HepG2 (cell line): ENCODE measurements at regions of chrX and their contacts with region 1.

Region 1: DNA sequence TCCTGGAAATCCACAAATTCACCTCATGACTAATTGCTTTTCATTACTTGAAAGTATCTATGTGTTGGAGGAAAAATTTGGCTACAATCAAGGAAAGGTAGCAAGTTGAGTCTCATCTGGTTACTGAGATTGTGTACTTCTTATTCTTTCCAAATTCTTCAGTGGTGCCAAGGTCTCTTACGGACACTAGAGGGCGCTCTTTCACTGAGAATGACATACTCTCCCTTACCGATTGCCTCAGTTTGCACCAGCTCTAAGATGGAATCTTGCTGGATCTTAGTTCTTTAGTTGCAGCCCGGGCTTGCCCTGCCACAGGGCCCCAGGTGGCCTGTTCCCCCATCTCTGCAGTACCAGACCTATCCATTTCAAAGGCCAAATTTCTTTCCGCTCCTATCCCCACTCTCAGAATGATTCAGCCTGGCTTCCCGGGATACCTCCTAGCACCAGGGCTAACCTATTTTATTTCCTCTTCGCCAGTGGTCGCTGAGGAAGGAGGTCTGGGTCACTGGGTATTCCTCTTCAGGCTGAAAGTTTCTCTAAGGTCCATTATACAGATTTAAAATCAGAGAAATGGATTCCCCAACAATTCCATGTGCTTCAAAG is 24.6 kb upstream of the GPR50 start:
- DNase-seq: peak; percentile 14
- ATAC-seq: peak; percentile 69
- H3K4me3 ChIP-seq: no peak overlapping the region
- H3K27ac ChIP-seq: no peak overlapping the region
- H3K4me1 ChIP-seq: no peaks in the 10 kb centered on the region
- H3K27me3 ChIP-seq: no peaks in the 10 kb centered on the region
- CTCF ChIP-seq: peak; percentile 75
- EP300 ChIP-seq: no peak
- POLR2A ChIP-seq: no peak
- RAD21 ChIP-seq: peak; percentile 57

Region 2: GRCh38 chrX:151177141-151178027 is 25.6 kb after region 1 on chrX:
- CTCF ChIA-PET with region 1: no interaction called
- POLR2A ChIA-PET with region 1: no interaction called
- in situ Hi-C with region 1: no loop called
- intact Hi-C with region 1: no loop called
- DNase-seq: no peak
- ATAC-seq: peak; percentile 93
- H3K4me3 ChIP-seq: peak overlapping the region in 2 of 3 experiments; percentile 4 to 33; a peak in 1 of 6 replicates
- H3K27ac ChIP-seq: no peak overlapping the region
- H3K4me1 ChIP-seq: no peaks in the 10 kb centered on the region
- H3K27me3 ChIP-seq: peaks cover 0 to 13% of the 10 kb centered on the region in 2 experiments; a peak in 3 of 5 replicates
- CTCF ChIP-seq: no peak
- EP300 ChIP-seq: no peak
- POLR2A ChIP-seq: no peak
- RAD21 ChIP-seq: no peak

Region 3: DNA sequence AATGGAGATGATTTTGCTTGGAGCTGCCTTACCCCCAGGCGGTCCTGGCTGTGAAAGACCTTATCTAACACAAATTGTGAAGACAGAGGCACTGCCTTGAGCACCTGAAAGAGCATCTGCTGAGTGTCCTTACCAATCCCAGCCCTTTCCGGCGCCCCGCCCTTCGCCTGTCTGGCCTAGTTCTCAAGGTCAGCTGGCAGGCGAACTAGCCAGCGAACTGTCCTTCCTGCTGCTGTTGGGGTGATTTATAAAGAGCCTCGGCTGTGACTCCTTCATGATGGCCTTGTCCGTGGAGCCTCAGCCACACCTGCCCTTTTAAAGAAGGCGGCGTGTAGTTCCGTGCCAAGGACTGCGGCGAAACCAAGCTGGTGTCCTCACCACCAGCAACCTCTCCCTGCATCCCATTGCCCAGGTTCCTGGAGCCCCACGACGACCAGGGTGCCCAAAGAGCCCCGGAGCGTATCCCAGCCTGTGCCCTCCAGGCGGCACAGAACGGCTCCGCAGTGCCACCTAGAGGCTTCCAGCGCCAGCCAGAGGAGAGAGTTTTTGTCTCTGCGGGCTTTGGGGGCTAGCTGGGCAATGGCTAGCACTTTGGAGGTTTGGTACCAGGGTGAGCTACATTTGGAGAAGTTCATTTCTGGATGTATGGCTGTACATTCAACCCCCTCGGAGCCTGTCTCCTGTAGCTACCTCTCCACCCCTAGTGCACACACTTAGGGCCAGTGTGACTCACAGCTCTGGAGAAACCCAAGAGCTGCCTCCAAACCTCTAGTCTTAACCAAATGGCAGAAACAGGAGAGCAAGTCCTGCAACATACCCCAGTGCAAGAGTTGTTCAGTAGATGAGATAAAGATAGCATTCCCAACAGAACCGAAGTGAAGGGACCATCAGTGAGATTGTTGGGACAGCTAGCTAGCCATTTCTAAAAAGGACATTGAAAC is 208.4 kb after region 1 on chrX:
- CTCF ChIA-PET with region 1: interaction called, 3 read pairs
- POLR2A ChIA-PET with region 1: no interaction called
- in situ Hi-C with region 1: loop called (anchors 25 kb)
- intact Hi-C with region 1: no loop called
- DNase-seq: peak; percentile 0
- ATAC-seq: peak; percentile 94
- H3K4me3 ChIP-seq: 0 out of 6 replicates have a peak overlapping the region, but pooled peaks of 1 of the 3 experiments have one; percentile 23
- H3K27ac ChIP-seq: no peak overlapping the region
- H3K4me1 ChIP-seq: no peaks in the 10 kb centered on the region
- H3K27me3 ChIP-seq: no peaks in the 10 kb centered on the region; a peak in 1 of 5 replicates
- CTCF ChIP-seq: peak; percentile 69
- EP300 ChIP-seq: no peak
- POLR2A ChIP-seq: no peak
- RAD21 ChIP-seq: 0 out of 2 replicates have a peak, but pooled peaks have one; percentile 14

Region 4: DNA sequence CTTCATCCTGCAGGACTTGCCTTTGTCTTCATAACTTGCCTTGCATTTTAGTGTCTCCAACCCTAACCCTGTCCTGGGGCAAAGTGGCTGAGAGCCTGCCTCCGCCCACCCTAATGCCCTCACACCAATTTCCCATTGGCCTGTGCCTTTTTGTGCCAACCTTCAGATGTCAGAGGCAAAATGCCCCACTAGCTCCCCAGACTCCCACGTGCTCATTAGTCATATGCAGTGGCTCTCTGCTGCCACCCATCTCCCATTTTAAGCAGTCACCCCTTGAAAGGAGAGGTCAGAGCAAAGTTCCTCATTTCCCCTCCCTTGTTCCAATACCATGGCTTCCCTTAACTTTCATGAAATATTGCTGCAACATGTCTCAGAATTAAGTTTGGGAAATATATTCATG is 336.9 kb after region 1 on chrX:
- CTCF ChIA-PET with region 1: no interaction called
- POLR2A ChIA-PET with region 1: no interaction called
- in situ Hi-C with region 1: loop called (anchors 25 kb)
- intact Hi-C with region 1: no loop called
- DNase-seq: peak; percentile 3
- ATAC-seq: peak; percentile 64
- H3K4me3 ChIP-seq: no peak overlapping the region
- H3K27ac ChIP-seq: no peak overlapping the region
- H3K4me1 ChIP-seq: no peaks in the 10 kb centered on the region
- H3K27me3 ChIP-seq: no peaks in the 10 kb centered on the region
- CTCF ChIP-seq: peak; percentile 54
- EP300 ChIP-seq: no peak
- POLR2A ChIP-seq: no peak
- RAD21 ChIP-seq: no peak

Region 5: DNA sequence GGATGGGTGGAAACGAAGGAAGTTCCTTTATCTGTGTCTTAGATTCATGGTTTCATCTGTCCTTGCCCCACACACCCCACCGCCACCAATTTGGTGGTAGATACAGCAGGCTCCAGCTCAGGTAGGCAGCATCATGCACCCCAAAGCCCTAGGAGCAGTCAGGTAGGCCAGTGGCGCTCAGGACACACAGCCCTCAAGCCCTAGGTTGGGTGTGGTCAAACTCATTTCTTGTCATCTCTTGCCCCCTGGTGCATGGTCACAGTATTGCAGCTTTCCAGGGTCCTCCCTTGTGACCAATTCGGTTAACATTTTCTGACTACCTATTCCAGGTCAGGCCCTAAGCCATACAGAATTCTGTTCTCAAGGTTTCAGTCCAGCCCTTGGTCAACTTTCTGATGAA is 529.0 kb after region 1 on chrX:
- CTCF ChIA-PET with region 1: interaction called, 24 read pairs
- POLR2A ChIA-PET with region 1: no interaction called
- in situ Hi-C with region 1: loop called (anchors 5 kb)
- intact Hi-C with region 1: no loop called
- DNase-seq: peak; percentile 45
- ATAC-seq: peak; percentile 87
- H3K4me3 ChIP-seq: no peak overlapping the region
- H3K27ac ChIP-seq: no peak overlapping the region
- H3K4me1 ChIP-seq: no peaks in the 10 kb centered on the region
- H3K27me3 ChIP-seq: no peaks in the 10 kb centered on the region
- CTCF ChIP-seq: peak; percentile 81
- EP300 ChIP-seq: no peak
- POLR2A ChIP-seq: no peak
- RAD21 ChIP-seq: peak; percentile 64